A673 (cell line): ENCODE measurements at regions of chr16 and their contacts with region 1.

Region 1: DNA sequence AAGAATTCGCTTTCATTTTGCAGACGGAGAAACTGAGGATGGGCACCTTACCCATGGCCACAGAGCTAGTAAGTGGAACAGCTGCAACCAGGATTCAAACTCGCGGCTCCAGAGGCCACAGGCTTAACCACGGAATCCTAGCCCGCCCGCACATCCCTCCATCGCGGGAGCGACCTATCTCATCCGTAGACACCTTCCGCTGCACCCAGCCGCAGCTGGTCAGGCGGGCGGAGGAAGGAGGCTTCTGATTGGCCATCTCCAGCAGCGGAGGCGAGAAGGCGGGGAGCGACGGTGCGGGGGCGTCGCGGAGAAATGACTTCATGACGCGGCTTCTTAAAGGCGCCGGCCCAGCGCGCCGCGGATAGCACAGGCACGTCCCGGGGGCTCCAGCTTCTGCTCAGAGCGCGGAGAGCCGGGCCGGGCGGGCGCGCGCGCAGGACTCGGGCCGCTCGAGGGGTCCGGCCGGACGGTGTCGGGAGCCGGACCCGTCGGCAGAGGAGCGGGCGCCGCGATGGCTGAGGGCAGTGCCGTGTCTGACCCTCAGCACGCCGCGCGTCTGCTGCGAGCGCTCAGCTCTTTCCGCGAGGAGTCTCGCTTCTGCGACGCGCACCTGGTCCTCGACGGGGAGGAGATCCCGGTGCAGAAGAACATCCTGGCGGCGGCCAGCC is at the start of gene GAN:
- DNase-seq: peak; percentile 98
- H3K4me3 ChIP-seq: peak within 1 kb of the TSS; percentile 85
- H3K27ac ChIP-seq: peak within 1 kb of the TSS; percentile 87
- H3K4me1 ChIP-seq: peaks cover 26% of the 10 kb centered on the region
- H3K27me3 ChIP-seq: no peaks in the 10 kb centered on the region
- CTCF ChIP-seq: no peak
- total RNA-seq, gene GAN: 15.2 and 18.0 TPM in 2 replicates

Region 2: GRCh38 chr16:81140930-81141780 is 173.6 kb before region 1 on chr16:
- CTCF ChIA-PET with region 1: no interaction called
- POLR2A ChIA-PET with region 1: no interaction called
- intact Hi-C with region 1: no loop called
- DNase-seq: no peak
- H3K4me3 ChIP-seq: no peak overlapping the region
- H3K27ac ChIP-seq: no peak overlapping the region
- H3K4me1 ChIP-seq: peaks cover 3% of the 10 kb centered on the region
- H3K27me3 ChIP-seq: no peaks in the 10 kb centered on the region
- CTCF ChIP-seq: peak; percentile 28; the same call in 1 of the 2 replicates

Region 3: DNA sequence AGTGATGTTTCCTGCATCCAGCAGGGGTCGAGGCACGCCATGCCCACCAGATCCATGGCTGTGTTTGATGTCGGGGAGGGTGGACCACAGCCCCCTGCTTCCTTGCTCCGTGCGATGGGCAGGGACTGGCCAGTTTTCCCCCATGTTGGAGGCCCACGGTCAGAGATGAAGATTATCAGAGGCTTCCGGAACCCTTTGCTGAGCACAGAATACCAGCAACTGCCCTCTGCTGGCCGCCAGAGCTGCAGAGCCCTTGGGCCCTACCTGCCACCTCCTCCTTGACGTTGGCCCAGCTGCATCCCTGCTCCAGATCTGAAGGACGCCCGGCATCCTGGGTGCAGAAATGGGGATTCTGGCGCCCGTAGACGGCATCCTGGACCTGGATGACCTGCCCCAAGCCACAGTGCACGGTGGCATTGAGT is 100.0 kb before region 1 on chr16:
- CTCF ChIA-PET with region 1: no interaction called
- POLR2A ChIA-PET with region 1: no interaction called
- intact Hi-C with region 1: loop called (anchors 5 kb)
- DNase-seq: no peak
- H3K4me3 ChIP-seq: no peak overlapping the region
- H3K27ac ChIP-seq: no peak overlapping the region
- H3K4me1 ChIP-seq: peaks cover 30% of the 10 kb centered on the region
- H3K27me3 ChIP-seq: no peaks in the 10 kb centered on the region
- CTCF ChIP-seq: no peak; the same call in 1 of the 2 replicates

Region 4: GRCh38 chr16:81645266-81645694 is 330.5 kb after region 1 on chr16:
- CTCF ChIA-PET with region 1: no interaction called
- POLR2A ChIA-PET with region 1: no interaction called
- intact Hi-C with region 1: no loop called
- DNase-seq: no peak
- H3K4me3 ChIP-seq: no peak overlapping the region
- H3K27ac ChIP-seq: no peak overlapping the region
- H3K4me1 ChIP-seq: no peaks in the 10 kb centered on the region
- H3K27me3 ChIP-seq: no peaks in the 10 kb centered on the region
- CTCF ChIP-seq: no peak